HCT116 (cell line): ENCODE measurements at regions of chr1 and their contacts with region 1.

Region 1: DNA sequence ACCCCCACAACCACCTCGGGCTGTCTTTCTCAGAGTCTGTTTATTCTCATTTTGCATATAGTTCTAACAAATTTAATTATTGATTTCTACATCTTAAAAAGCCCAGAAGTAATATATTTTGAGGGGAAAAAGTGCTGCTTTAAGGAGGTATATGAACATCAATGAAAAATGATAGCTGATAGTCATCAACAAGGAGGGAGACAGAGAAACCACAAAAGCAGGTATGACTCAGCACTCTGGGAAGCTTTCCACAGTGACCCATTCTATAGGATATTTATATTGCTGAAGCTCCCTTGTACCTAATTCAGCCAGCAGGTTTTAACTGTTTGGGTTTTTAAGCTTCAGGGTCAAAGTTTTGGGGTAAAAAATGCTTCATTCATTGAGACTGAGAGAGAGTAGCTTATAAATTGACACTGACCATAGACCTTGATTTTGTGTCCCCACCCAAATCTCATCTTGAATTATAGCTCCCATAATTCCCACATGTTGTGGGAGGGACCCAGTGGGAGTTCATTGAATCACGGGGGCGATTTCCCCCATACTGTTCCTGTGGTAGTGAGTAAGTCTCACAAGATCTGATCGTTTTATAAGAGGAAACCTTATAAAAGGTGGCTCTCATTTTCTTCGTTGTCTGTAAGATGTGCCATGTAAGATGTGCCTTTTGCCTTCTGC is 27.4 kb downstream of the VANGL1 start:
- DNase-seq: peak; percentile 69
- ATAC-seq: peak; percentile 59
- H3K4me3 ChIP-seq: peak overlapping the region in 1 of 2 experiments; percentile 36; a peak in 3 of 4 replicates
- H3K27ac ChIP-seq: peak overlapping the region; percentile 81
- H3K4me1 ChIP-seq: peaks cover 66 to 86% of the 10 kb centered on the region in 2 experiments
- H3K27me3 ChIP-seq: no peaks in the 10 kb centered on the region
- CTCF ChIP-seq: no peak
- POLR2A ChIP-seq: no peak
- RAD21 ChIP-seq: no peak

Region 2: GRCh38 chr1:115685029-115685705 is 16.0 kb after region 1 on chr1:
- CTCF ChIA-PET with region 1: no interaction called
- POLR2A ChIA-PET with region 1: no interaction called
- RAD21 ChIA-PET with region 1: no interaction called
- intact Hi-C with region 1: no loop called
- DNase-seq: no peak
- ATAC-seq: no peak
- H3K4me3 ChIP-seq: no peak overlapping the region
- H3K27ac ChIP-seq: no peak overlapping the region
- H3K4me1 ChIP-seq: no peaks in the 10 kb centered on the region
- H3K27me3 ChIP-seq: no peaks in the 10 kb centered on the region
- CTCF ChIP-seq: no peak
- POLR2A ChIP-seq: no peak
- RAD21 ChIP-seq: no peak

Region 3: DNA sequence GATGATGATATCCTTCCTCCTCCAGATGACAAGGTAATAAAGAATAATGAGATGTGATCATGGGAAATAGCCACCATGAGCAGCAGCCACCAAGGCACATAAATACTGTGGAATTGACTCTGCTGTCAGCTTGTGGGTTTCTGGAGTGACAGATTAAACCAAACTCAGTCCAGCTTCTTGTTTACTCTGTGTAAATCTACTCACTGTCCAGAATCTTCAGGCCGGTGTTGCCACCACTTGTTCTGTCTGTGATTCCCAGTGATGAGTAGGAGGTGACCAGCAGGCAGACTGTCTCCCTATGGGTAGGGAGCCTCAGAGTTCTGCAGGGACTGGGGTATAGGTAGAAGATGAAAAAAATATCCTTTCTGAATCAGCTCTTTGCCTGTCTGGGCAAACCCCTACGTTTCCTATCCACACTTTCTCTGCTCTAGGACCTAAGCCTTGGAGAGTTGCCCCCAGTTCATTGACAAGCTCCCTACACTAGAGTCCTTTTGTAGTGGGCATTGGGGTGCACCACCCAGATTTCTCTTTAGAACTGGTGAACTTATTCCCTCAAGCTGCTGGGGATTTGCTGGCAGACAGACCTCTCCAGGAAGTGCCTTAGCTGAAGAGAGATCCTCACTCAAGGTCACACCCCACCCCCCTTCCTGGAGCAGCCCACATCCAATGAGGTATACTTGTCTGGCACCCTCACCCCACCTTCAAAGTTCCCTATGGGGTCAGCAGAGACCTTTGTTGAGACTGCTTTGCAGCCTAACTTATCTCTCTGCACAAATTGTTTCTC is 751.5 kb after region 1 on chr1:
- CTCF ChIA-PET with region 1: no interaction called
- POLR2A ChIA-PET with region 1: no interaction called
- RAD21 ChIA-PET with region 1: no interaction called
- intact Hi-C with region 1: loop called (anchors 5 kb)
- DNase-seq: no peak
- ATAC-seq: no peak
- H3K4me3 ChIP-seq: no peak overlapping the region
- H3K27ac ChIP-seq: no peak overlapping the region
- H3K4me1 ChIP-seq: peaks cover 8 to 28% of the 10 kb centered on the region in 2 experiments; a peak in 3 of 4 replicates
- H3K27me3 ChIP-seq: no peaks in the 10 kb centered on the region
- CTCF ChIP-seq: no peak
- POLR2A ChIP-seq: no peak
- RAD21 ChIP-seq: no peak